ENCODE measurements at regions of chr6 and their contacts with region 1.

Region 1: GRCh38 chr6:100116411-100117194 is 122.6 kb upstream of the MCHR2 start:
- H3K4me3 Mint-ChIP-seq: no peak overlapping the region
- H3K27ac Mint-ChIP-seq: no peak overlapping the region
- H3K4me1 Mint-ChIP-seq: no peaks in the 10 kb centered on the region
- H3K27me3 Mint-ChIP-seq: no peaks in the 10 kb centered on the region

Region 2: GRCh38 chr6:100657678-100658330 is 541.2 kb after region 1 on chr6:
- intact Hi-C with region 1: loop called (anchors 5 kb)
- H3K4me3 Mint-ChIP-seq: no peak overlapping the region
- H3K27ac Mint-ChIP-seq: no peak overlapping the region
- H3K4me1 Mint-ChIP-seq: no peaks in the 10 kb centered on the region
- H3K27me3 Mint-ChIP-seq: no peaks in the 10 kb centered on the region

Measured in dendritic cell treated with granulocyte-macrophage colony-stimulating factor and Interleukin-4, amounts not matched to agents 40 ng/mL and 50 ng/mL, for 4 days (primary cell).